Endothelial cell of umbilical vein (primary cell): ENCODE measurements at regions of chrX and their contacts with region 1.

Region 1: DNA sequence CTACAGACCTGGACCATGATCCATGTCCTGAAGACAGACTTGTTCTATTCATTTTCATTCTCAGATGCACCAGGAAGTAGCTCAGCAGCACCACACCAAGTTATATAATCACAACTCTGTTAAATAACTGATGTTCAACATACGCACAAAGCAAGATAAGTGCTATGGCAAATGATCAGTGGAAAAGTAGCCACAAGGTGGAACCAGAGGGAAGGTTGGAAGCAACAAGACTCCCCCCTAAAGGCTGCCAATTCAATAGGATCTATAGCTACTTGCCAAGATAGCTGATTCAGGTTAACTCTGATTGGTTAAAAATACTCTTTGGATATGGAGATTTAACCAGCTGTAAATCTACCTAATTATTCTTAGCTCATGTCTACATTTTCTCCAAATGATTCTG is 23.7 kb upstream of the FAM47B start:
- DNase-seq: peak; percentile 67
- H3K4me3 ChIP-seq: no peak overlapping the region
- H3K27ac ChIP-seq: no peak overlapping the region
- H3K4me1 ChIP-seq: no peaks in the 10 kb centered on the region
- H3K27me3 ChIP-seq: no peaks in the 10 kb centered on the region
- CTCF ChIP-seq: peak; percentile 28 to 42
- POLR2A ChIP-seq: no peak

Region 2: DNA sequence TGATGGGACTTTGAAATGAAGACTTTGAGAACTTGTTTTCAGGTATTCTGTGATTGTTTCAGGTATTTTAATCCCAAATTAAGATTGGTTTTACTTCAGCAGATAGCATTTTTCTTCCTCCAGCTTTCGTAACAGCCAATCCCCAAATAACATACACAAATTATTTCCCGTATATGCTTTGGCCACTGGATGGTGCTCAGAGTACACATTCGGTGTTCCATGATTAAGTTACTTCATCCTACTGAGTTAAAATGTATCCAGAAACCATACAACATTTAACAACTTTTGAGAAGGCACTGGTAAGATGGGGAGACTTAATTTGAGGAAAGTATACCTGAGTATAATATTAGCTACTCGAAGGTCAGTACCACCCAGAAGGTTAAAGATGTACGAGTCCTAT is 553.4 kb before region 1 on chrX:
- CTCF ChIA-PET with region 1: interaction called, 5 read pairs
- POLR2A ChIA-PET with region 1: no interaction called
- dilution Hi-C with region 1: no loop called
- intact Hi-C with region 1: loop called (anchors 10 kb)
- DNase-seq: peak; percentile 65
- H3K4me3 ChIP-seq: no peak overlapping the region
- H3K27ac ChIP-seq: no peak overlapping the region
- H3K4me1 ChIP-seq: no peaks in the 10 kb centered on the region
- H3K27me3 ChIP-seq: no peaks in the 10 kb centered on the region
- CTCF ChIP-seq: peak; percentile 35
- POLR2A ChIP-seq: no peak

Region 3: DNA sequence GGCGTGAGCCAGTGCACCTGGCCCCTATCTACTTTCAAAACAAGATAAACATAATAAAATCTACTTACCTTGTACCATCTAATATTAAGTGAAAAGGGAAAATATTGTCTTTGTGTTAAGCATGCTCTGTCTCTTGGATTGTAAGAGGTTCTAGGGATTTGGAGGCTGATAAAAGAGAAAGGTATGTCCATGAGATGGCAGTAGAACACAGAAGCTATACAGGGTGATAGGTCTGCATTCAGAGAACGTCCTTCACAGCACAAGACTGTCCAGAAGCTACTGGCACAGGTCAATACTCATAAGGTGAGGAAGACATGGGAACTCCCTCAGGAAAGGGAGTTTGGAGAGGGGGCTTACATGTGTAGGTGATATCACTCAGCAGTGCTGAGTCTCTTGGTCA is 397.3 kb before region 1 on chrX:
- CTCF ChIA-PET with region 1: interaction called, 11 read pairs
- POLR2A ChIA-PET with region 1: no interaction called
- dilution Hi-C with region 1: no loop called
- intact Hi-C with region 1: no loop called
- DNase-seq: peak; percentile 51
- H3K4me3 ChIP-seq: no peak overlapping the region
- H3K27ac ChIP-seq: no peak overlapping the region
- H3K4me1 ChIP-seq: no peaks in the 10 kb centered on the region
- H3K27me3 ChIP-seq: no peaks in the 10 kb centered on the region
- CTCF ChIP-seq: peak in 1 of 2 donors; percentile 8
- POLR2A ChIP-seq: no peak

Region 4: DNA sequence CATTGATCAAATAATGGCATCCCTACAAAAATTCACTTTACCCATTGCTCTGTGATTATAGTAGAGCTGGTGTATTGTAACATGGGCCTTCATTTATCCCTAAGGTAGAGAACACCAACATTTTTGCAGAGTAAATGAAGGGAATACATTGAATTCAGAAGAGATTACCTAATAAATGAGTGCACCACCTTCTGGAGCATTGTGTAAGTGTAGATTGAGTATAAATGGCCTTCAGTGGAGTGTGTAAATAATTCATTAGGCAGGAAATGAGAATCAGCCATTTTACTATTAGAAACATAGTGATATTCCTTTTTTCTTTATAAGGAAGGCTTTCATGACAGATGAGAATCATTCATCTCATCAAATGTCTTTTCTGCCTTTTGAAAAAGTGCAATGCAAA is 179.6 kb after region 1 on chrX:
- CTCF ChIA-PET with region 1: interaction called, 25 read pairs
- POLR2A ChIA-PET with region 1: no interaction called
- dilution Hi-C with region 1: no loop called
- intact Hi-C with region 1: loop called (anchors 1 kb)
- DNase-seq: peak; percentile 15
- H3K4me3 ChIP-seq: no peak overlapping the region
- H3K27ac ChIP-seq: no peak overlapping the region
- H3K4me1 ChIP-seq: no peaks in the 10 kb centered on the region
- H3K27me3 ChIP-seq: no peaks in the 10 kb centered on the region
- CTCF ChIP-seq: no peak
- POLR2A ChIP-seq: no peak

Region 5: DNA sequence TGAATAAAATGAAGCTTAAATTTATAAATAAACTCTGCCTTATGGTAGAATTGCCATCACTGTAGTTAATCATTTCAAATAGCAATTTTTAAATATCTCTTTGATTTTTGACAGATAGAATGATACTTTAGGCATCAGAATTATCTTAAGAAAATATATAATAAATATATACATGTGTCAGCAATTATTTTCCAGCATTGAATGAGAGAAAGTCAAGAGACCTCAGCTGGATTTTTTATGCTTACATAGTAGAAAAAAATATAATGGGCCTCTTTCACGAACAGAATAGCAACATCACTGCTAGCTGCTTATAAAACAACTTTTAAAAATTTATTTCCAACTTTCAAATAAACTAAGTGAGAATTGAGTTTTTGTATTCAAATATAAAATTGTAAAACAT is 455.3 kb after region 1 on chrX:
- CTCF ChIA-PET with region 1: no interaction called
- POLR2A ChIA-PET with region 1: no interaction called
- dilution Hi-C with region 1: no loop called
- intact Hi-C with region 1: loop called (anchors 10 kb)
- DNase-seq: no peak
- H3K4me3 ChIP-seq: no peak overlapping the region
- H3K27ac ChIP-seq: no peak overlapping the region
- H3K4me1 ChIP-seq: no peaks in the 10 kb centered on the region
- H3K27me3 ChIP-seq: no peaks in the 10 kb centered on the region
- CTCF ChIP-seq: no peak
- POLR2A ChIP-seq: no peak